ENCODE measurements at regions of chr12 and their contacts with region 1.

Region 1: DNA sequence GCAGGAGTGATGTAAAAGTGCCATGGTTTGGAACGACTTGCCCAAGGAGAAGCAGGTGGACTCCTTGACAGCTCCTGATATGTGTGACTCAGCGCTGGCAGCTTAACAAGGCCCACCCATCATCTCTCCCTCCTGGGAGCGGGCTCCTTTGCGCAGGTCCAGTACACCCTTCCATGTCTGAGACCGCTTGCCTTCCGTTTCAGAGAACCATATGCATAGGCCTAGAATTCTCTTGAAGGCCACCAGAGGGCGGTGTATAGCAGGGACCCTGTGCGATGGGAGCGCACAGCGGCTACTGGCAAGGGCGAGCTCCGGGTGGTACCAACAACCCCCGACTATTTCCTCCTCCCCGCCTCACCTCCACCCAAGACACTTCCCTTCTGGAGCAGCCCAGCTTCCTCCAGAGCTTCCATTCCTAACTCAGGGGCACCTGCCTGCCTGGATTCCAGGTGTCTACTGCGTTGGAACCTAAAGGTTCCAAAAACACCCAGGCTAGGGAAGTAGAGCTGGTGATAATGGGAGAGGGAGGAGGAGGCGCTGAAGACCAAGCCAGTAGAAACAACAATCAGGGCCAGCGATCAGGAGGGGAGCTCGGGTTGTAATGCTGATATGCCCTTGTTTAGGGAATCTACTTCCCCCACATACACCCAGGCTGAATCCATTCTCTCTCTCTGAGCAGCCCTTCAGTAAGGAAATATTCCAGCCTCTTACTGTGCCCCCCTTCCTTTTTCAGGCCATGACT is 6.2 kb downstream of the DHH start:
- DNase-seq: peak; percentile 84
- H3K4me3 ChIP-seq: peak overlapping the region; percentile 21
- H3K27ac ChIP-seq: no peak overlapping the region
- H3K4me1 ChIP-seq: peaks cover 19% of the 10 kb centered on the region
- CTCF ChIP-seq: peak; percentile 92

Region 2: DNA sequence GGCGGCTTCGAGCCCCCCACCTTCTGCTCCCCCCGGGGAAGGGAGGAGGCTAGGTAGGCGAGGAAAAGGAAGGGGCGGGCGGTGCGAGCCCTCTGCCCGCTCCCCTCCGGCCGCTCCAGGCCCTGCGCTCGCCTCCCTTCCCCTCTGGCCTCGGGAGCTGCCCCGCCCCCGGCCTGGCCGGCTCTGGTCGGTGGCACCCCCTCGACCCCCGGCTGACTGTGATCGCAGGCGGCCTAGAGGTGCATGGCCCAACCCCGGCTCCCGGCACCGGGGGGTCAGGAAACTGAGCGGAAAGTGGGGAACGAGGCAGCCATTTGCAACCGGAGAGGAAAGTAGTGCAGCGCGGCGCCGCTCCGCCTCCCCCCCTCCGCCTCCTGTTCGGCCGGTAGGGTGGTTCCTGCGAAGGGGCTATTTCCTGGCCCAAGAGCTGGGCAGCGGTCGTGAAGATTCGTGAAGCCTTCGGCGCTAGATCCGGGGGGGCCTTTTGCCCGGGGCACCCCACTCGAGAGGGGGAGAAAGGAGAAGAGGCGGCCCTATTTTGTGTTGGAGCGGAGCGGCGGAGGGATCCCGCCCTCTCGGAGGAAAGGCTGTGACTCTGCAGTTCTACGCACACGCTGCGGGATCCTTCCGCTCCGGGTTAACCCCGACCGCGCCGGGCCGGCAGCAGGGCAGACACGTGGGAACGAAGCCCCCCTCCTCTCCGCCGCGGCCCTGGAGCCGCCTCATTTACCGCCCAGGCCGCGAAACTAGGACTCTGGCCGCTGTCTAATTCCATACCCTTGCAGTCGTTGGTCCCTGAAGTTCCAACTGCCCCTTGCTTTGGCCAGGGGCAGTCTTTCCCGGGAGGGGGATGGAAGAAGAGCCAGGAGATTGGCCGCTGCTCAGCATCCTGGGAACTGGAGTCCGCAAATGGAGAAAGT is 27.9 kb before region 1 on chr12 and contains the start of gene KMT2D:
- CTCF ChIA-PET with region 1: interaction called, 6 read pairs
- POLR2A ChIA-PET with region 1: interaction called, 3 read pairs
- intact Hi-C with region 1: loop called (anchors 1 kb)
- DNase-seq: peak; percentile 98
- H3K4me3 ChIP-seq: peak within 1 kb of the TSS; percentile 87
- H3K27ac ChIP-seq: peak within 1 kb of the TSS; percentile 72
- H3K4me1 ChIP-seq: peaks cover 38% of the 10 kb centered on the region
- CTCF ChIP-seq: no peak
- total RNA-seq, gene KMT2D: 41.8 and 43.2 TPM in 2 replicates

Region 3: GRCh38 chr12:49105608-49106007 is 17.2 kb after region 1 on chr12:
- CTCF ChIA-PET with region 1: interaction called, 16 read pairs
- POLR2A ChIA-PET with region 1: interaction called, 4 read pairs
- intact Hi-C with region 1: no loop called
- DNase-seq: peak; percentile 25
- H3K4me3 ChIP-seq: peak overlapping the region; percentile 10
- H3K27ac ChIP-seq: no peak overlapping the region
- H3K4me1 ChIP-seq: peaks cover 43% of the 10 kb centered on the region
- CTCF ChIP-seq: no peak

Region 4: GRCh38 chr12:49121047-49121696 is 32.8 kb after region 1 on chr12:
- CTCF ChIA-PET with region 1: no interaction called
- POLR2A ChIA-PET with region 1: interaction called, 3 read pairs
- intact Hi-C with region 1: loop called (anchors 1 kb)
- DNase-seq: peak; percentile 26
- H3K4me3 ChIP-seq: no peak overlapping the region
- H3K27ac ChIP-seq: no peak overlapping the region
- H3K4me1 ChIP-seq: no peaks in the 10 kb centered on the region
- CTCF ChIP-seq: peak; percentile 62

Region 5: DNA sequence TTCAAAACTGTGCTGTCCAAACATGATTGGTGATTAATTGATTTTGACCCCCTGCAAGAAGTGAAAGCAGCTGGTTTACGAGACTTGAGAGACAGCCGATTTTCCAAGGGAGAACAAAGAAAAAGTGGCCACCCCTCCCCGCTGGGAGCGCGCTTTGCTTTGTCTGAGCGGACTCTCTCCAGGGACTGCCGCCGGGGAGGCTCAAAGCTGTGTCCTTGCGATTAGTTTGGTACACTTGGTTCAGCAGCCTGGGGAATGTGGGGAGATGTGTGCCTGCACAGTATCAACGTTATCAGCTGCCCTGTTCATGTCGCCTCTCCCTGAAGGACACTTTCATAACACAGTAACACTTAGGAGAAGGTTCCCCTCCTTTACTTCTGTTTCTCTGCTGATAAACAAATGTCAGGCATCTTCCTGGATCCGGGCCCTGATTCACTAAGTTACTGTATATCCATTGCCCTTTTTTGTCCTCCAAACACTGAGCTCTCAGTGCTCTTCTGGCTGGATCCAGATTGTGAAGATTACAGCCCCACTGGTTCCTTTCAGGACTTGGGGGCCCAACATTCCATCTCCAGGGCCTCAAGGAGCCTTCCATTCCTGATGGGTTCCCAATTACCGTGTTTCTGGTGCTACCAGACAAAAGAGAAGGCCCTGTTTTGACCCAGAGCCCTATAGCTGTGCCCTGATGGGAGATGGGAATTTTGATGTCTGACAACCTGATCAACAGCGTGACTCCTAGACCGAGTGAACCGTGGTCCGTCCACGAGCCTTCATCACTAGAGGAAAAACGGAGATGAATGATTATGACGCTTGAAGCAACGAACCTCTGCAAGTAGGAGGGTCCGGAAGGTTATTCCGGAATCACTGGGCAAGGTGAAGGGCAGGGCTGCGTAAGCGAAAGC is 144.8 kb after region 1 on chr12:
- CTCF ChIA-PET with region 1: no interaction called
- POLR2A ChIA-PET with region 1: no interaction called
- intact Hi-C with region 1: loop called (anchors 1 kb)
- DNase-seq: no peak
- H3K4me3 ChIP-seq: no peak overlapping the region
- H3K27ac ChIP-seq: no peak overlapping the region
- H3K4me1 ChIP-seq: peaks cover 4% of the 10 kb centered on the region
- CTCF ChIP-seq: no peak

Measured in OCI-LY7 (cell line).